Activated naive CD4-positive, alpha-beta T cell treated with anti-CD3 and anti-CD28 coated beads for 36 hours (primary cell): ENCODE measurements at regions of chr9 and their contacts with region 1.

Region 1: GRCh38 chr9:5886114-5886939 is 4.4 kb upstream of the MLANA start:
- DNase-seq: peak; percentile 92
- H3K4me3 Mint-ChIP-seq: no peak overlapping the region
- H3K27ac Mint-ChIP-seq: no peak overlapping the region
- H3K4me1 Mint-ChIP-seq: no peaks in the 10 kb centered on the region
- H3K27me3 Mint-ChIP-seq: no peaks in the 10 kb centered on the region

Region 2: DNA sequence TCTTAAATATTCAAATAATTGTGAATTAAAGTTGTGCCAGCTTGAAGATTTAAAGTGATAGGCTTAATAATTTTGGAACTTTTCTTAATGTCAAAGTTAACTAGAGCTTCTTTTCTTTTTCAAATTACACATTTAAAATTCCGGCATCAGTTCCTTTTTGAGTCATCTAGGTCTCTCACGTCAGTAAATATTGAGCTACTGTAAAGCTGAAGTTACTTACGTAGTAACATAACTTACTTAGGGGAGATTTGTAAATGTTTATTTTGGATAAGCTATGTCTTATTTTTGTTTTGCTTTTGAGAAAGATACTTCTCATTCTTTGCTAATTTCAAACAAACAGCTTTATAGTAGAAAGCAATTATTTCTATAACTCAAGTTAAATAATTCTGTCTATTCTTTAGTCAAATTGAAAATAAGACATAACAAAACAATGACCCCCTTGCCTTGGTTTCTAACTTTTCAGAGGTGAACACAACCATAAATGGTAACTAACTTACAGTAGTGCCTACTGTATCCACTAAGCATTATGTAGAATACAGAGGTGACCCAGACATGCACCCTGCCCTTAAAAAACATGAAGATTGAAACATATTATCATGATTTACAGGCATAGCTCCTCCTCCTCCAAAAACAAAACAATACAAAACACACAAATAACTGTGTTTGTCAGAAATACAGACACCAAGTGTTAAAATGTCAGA is 406.2 kb before region 1 on chr9:
- CTCF ChIA-PET with region 1: no interaction called
- intact Hi-C with region 1: no loop called
- DNase-seq: no peak
- H3K4me3 Mint-ChIP-seq: no peak overlapping the region
- H3K27ac Mint-ChIP-seq: no peak overlapping the region
- H3K4me1 Mint-ChIP-seq: peaks cover 10% of the 10 kb centered on the region
- H3K27me3 Mint-ChIP-seq: no peaks in the 10 kb centered on the region

Region 3: GRCh38 chr9:5799314-5799713 is 87.0 kb before region 1 on chr9:
- CTCF ChIA-PET with region 1: interaction called, 5 read pairs
- intact Hi-C with region 1: loop called (anchors 1 kb)
- DNase-seq: peak; percentile 42
- H3K4me3 Mint-ChIP-seq: no peak overlapping the region
- H3K27ac Mint-ChIP-seq: no peak overlapping the region
- H3K4me1 Mint-ChIP-seq: peaks cover 26% of the 10 kb centered on the region
- H3K27me3 Mint-ChIP-seq: no peaks in the 10 kb centered on the region

Region 4: GRCh38 chr9:5872511-5872910 is 13.8 kb before region 1 on chr9:
- CTCF ChIA-PET with region 1: interaction called, 12 read pairs
- intact Hi-C with region 1: no loop called
- DNase-seq: no peak
- H3K4me3 Mint-ChIP-seq: no peak overlapping the region
- H3K27ac Mint-ChIP-seq: no peak overlapping the region
- H3K4me1 Mint-ChIP-seq: peaks cover 12% of the 10 kb centered on the region
- H3K27me3 Mint-ChIP-seq: no peaks in the 10 kb centered on the region

Region 5: GRCh38 chr9:5976674-5977397 is 90.5 kb after region 1 on chr9:
- CTCF ChIA-PET with region 1: interaction called, 22 read pairs
- intact Hi-C with region 1: loop called (anchors 1 kb)
- DNase-seq: no peak
- H3K4me3 Mint-ChIP-seq: no peak overlapping the region
- H3K27ac Mint-ChIP-seq: peak overlapping the region; percentile 19
- H3K4me1 Mint-ChIP-seq: peaks cover 27% of the 10 kb centered on the region
- H3K27me3 Mint-ChIP-seq: no peaks in the 10 kb centered on the region

Region 6: GRCh38 chr9:6015278-6016157 is 129.2 kb after region 1 on chr9 and contains the start of gene RANBP6:
- CTCF ChIA-PET with region 1: interaction called, 3 read pairs
- intact Hi-C with region 1: loop called (anchors 2 kb)
- DNase-seq: peak; percentile 95
- H3K4me3 Mint-ChIP-seq: peak within 1 kb of the TSS; percentile 98
- H3K27ac Mint-ChIP-seq: peak within 1 kb of the TSS; percentile 99
- H3K4me1 Mint-ChIP-seq: peaks cover 42% of the 10 kb centered on the region
- H3K27me3 Mint-ChIP-seq: no peaks in the 10 kb centered on the region
- total RNA-seq, gene RANBP6: 19.0 to 19.5 TPM

Region 7: DNA sequence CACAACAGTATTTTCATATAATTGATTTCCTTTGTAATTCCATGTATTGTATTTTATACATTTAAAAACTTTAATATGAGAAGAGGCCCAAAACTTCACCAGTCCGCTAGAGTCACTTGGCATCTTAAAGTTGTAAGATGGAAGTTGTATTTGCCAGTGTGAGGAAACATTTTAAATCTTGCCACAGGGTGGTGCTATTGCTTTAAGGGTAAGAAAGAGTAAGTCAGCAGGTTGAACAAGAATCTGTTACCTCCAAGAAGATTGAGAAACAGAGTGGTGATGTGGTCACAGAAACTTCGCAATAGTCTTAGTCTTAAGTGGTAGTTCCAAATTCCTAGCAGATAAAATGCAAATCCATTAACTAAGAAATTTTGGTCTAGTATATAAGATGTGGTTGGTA is 168.9 kb after region 1 on chr9:
- CTCF ChIA-PET with region 1: interaction called, 144 read pairs
- intact Hi-C with region 1: loop called (anchors 1 kb)
- DNase-seq: peak; percentile 65
- H3K4me3 Mint-ChIP-seq: no peak overlapping the region
- H3K27ac Mint-ChIP-seq: no peak overlapping the region
- H3K4me1 Mint-ChIP-seq: peaks cover 7% of the 10 kb centered on the region
- H3K27me3 Mint-ChIP-seq: peaks cover 3% of the 10 kb centered on the region

Region 8: GRCh38 chr9:6566409-6567139 is 680.2 kb after region 1 on chr9:
- CTCF ChIA-PET with region 1: interaction called, 3 read pairs
- intact Hi-C with region 1: loop called (anchors 2 kb)
- DNase-seq: peak; percentile 63
- H3K4me3 Mint-ChIP-seq: no peak overlapping the region
- H3K27ac Mint-ChIP-seq: peak overlapping the region; percentile 30
- H3K4me1 Mint-ChIP-seq: peaks cover 11% of the 10 kb centered on the region
- H3K27me3 Mint-ChIP-seq: no peaks in the 10 kb centered on the region